Naive thymus-derived CD4-positive, alpha-beta T cell (primary cell): ENCODE measurements at regions of chr3 and their contacts with region 1.

Region 1: DNA sequence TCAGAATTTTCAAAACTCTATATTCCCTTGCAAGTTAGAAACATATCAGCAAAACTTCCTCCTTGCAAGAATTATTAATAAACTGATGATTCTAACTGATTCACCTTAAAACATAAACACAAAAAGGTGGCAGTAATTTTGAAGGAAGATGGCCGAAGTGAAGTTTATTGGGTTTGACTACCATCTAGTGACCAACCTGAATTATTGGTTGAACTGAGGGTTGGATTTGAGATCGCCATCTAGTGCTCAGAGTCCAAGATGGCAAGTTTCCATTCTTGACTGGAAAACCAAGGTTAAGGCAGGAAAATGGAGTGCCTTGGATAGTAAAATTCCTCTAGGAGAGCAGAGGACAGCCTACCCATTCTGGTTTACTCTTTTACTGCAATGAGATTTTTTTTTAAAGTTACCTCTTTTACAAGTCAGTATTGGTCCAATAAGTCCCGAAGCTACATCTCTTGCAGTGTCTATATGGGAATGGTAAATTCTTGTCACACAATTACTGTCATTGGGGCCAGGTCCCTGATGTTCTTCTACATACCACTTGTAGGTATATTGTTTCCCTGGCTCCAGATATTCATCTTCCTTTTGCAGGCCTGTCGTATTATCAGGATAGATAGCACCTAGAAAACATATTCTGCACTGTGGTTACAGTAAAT is 51.6 kb upstream of the CP start:
- DNase-seq: peak in 7 of 9 donors; percentile 19 to 67 (median 52)
- ATAC-seq: peak; percentile 92
- H3K4me3 ChIP-seq: no peak overlapping the region
- H3K4me3 Mint-ChIP-seq: no peak overlapping the region
- H3K27ac ChIP-seq: no peak overlapping the region
- H3K27ac Mint-ChIP-seq: no peak overlapping the region
- H3K4me1 ChIP-seq: peaks cover 4 to 13% of the 10 kb centered on the region in 2 donors
- H3K4me1 Mint-ChIP-seq: peaks cover 6 to 14% (median 13%) of the 10 kb centered on the region in 7 donors
- H3K27me3 ChIP-seq: no peaks in the 10 kb centered on the region
- H3K27me3 Mint-ChIP-seq: peaks cover 0 to 15% (median 0%) of the 10 kb centered on the region in 5 donors

Region 2: GRCh38 chr3:148861277-148861869 is 411.9 kb before region 1 on chr3:
- CTCF ChIA-PET with region 1: interaction called, 3 read pairs
- POLR2A ChIA-PET with region 1: no interaction called
- intact Hi-C with region 1: loop called (anchors 1 to 5 kb)
- DNase-seq: peak in 5 of 9 donors; percentile 4 to 35 (median 14)
- ATAC-seq: peak; percentile 72
- H3K4me3 ChIP-seq: no peak overlapping the region
- H3K4me3 Mint-ChIP-seq: no peak overlapping the region
- H3K27ac ChIP-seq: no peak overlapping the region
- H3K27ac Mint-ChIP-seq: no peak overlapping the region
- H3K4me1 ChIP-seq: no peaks in the 10 kb centered on the region
- H3K4me1 Mint-ChIP-seq: no peaks in the 10 kb centered on the region
- H3K27me3 ChIP-seq: peaks cover 0 to 3% of the 10 kb centered on the region in 2 donors
- H3K27me3 Mint-ChIP-seq: peaks cover 4 to 22% (median 13%) of the 10 kb centered on the region in 5 donors

Region 3: DNA sequence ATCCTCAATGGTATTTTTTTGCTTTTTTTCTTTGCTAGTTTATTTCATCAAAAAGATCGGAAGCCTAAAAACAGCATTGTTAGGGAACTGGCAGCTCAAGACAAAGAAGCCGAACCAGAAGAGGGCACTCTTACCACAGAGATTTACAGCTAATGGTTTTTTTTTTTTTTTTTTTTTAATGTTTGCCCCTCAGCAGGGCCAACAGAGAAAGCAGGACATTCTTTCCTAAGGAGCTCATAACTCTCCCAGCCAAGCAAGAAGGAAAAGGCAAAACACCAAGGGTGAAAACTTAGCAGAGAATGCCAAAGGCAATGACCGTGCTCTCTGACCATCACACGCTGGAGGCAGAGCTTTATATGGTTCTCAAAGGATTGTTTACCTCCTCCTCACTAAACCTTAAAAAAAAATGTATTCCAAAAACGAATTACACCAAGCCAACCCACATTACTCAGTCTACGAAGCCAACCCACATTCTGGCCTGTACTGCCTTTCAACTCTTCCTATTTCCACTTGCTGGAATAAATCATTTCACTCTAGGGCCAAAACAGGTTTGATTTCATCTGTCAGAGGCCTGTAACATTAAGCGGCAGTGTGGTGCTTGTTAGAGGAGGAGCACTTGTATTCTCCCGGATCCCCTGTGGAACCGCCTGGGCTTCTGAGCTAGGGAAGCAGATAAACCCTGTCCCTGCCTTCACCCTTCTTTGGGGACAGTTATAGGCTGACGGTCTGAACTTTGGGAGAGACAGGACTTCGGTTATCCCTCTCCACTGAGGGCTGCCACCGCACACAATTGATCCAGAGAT is 317.5 kb before region 1 on chr3:
- CTCF ChIA-PET with region 1: interaction called, 6 read pairs
- POLR2A ChIA-PET with region 1: no interaction called
- intact Hi-C with region 1: loop called (anchors 1 kb)
- DNase-seq: peak in 4 of 9 donors; percentile 13 to 41 (median 32)
- ATAC-seq: peak; percentile 41
- H3K4me3 ChIP-seq: no peak overlapping the region
- H3K4me3 Mint-ChIP-seq: no peak overlapping the region
- H3K27ac ChIP-seq: no peak overlapping the region
- H3K27ac Mint-ChIP-seq: no peak overlapping the region
- H3K4me1 ChIP-seq: no peaks in the 10 kb centered on the region
- H3K4me1 Mint-ChIP-seq: peaks cover 0 to 13% (median 6%) of the 10 kb centered on the region in 7 donors
- H3K27me3 ChIP-seq: no peaks in the 10 kb centered on the region
- H3K27me3 Mint-ChIP-seq: peaks cover 0 to 17% (median 0%) of the 10 kb centered on the region in 5 donors

Region 4: GRCh38 chr3:149086232-149086988 is 186.8 kb before region 1 on chr3 and contains the start of gene HLTF:
- CTCF ChIA-PET with region 1: no interaction called
- POLR2A ChIA-PET with region 1: no interaction called
- intact Hi-C with region 1: loop called (anchors 1 kb)
- DNase-seq: peak; percentile 75 to 93 (median 90)
- ATAC-seq: peak; percentile 99
- H3K4me3 ChIP-seq: peak within 1 kb of the TSS; percentile 97
- H3K4me3 Mint-ChIP-seq: peak within 1 kb of the TSS; percentile 84 to 100 (median 97)
- H3K27ac ChIP-seq: peak within 1 kb of the TSS; percentile 64
- H3K27ac Mint-ChIP-seq: peak within 1 kb of the TSS; percentile 54 to 95 (median 86)
- H3K4me1 ChIP-seq: peaks cover 4 to 18% of the 10 kb centered on the region in 2 donors
- H3K4me1 Mint-ChIP-seq: peaks cover 15 to 28% (median 22%) of the 10 kb centered on the region in 7 donors
- H3K27me3 ChIP-seq: no peaks in the 10 kb centered on the region
- H3K27me3 Mint-ChIP-seq: no peaks in the 10 kb centered on the region
- total RNA-seq, gene HLTF: 9.1 to 26.5 (median 17.3) TPM

Region 5: DNA sequence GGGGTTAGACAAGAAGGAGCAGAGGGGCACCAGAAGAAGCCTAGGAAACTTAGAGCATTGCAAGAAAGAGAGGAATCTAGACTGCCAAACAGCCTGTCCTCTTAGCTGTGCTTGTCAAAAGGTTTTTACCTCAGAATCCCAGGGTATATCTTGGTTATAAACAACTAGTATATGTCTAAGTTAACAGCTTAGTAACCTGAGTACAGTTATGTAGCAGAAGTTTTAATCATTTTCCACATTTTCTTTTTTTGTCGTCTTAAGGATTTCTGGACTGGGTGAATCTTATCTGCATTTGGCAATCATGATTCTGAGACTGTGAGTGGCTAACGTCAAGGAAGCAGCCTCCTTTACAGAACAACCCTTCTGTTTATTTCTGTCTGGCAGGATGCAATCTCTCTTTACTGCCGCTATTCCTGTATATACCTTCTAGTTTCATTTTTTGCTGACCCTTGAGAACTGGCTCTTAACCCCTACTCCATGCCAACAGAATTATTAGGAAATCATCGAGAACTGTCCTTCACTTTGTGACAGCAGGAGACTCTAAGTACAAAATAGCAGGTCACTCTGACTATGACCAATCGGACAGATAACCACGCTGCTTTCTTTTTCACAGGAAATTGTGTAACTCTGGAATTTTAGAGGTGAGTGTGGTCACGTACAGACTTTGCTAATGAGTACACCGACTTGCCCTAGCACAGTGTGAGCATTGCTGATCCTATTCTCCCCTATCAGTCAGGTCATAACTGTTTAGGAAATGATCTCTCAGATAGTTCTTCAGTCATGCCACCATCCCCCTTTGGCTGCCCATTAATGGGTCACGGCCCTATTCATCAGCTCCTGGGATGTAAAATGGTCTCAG is 48.3 kb before region 1 on chr3:
- CTCF ChIA-PET with region 1: interaction called, 3 read pairs
- POLR2A ChIA-PET with region 1: no interaction called
- intact Hi-C with region 1: loop called in 1 of 2 experiments (anchors 2 kb)
- DNase-seq: peak in 2 of 9 donors; percentile 2 to 41
- ATAC-seq: peak; percentile 90
- H3K4me3 ChIP-seq: peak overlapping the region; percentile 47
- H3K4me3 Mint-ChIP-seq: peak overlapping the region; percentile 31 to 86 (median 82)
- H3K27ac ChIP-seq: no peak overlapping the region
- H3K27ac Mint-ChIP-seq: peak overlapping the region in 8 of 9 donors; percentile 1 to 90 (median 39)
- H3K4me1 ChIP-seq: peaks cover 0 to 7% of the 10 kb centered on the region in 2 donors
- H3K4me1 Mint-ChIP-seq: peaks cover 14 to 32% (median 25%) of the 10 kb centered on the region in 7 donors
- H3K27me3 ChIP-seq: no peaks in the 10 kb centered on the region
- H3K27me3 Mint-ChIP-seq: peaks cover 0 to 6% (median 0%) of the 10 kb centered on the region in 5 donors

Region 6: DNA sequence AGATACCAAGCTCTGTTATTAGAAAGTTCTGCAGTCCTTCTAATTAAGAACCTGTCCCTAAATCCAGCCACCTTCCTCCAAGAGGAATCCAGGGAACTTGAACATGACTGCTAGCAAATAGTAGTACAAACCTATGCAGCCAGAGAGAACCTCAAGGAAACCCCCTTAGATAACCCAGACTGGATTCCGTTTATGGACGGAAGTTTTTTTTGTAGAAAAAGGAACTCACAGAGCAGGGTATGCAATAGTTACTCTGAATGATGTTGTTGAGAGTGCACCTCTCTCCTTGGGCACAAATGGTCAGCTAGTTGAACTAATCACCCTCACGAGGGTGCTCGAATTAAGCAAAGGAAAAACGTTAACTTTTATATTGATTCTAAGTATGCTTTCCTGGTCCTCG is 19.4 kb after region 1 on chr3:
- CTCF ChIA-PET with region 1: no interaction called
- POLR2A ChIA-PET with region 1: no interaction called
- intact Hi-C with region 1: no loop called
- DNase-seq: no peak
- ATAC-seq: no peak
- H3K4me3 ChIP-seq: no peak overlapping the region
- H3K4me3 Mint-ChIP-seq: no peak overlapping the region
- H3K27ac ChIP-seq: no peak overlapping the region
- H3K27ac Mint-ChIP-seq: no peak overlapping the region
- H3K4me1 ChIP-seq: no peaks in the 10 kb centered on the region
- H3K4me1 Mint-ChIP-seq: peaks cover 0 to 5% (median 0%) of the 10 kb centered on the region in 7 donors
- H3K27me3 ChIP-seq: no peaks in the 10 kb centered on the region
- H3K27me3 Mint-ChIP-seq: peaks cover 0 to 8% (median 0%) of the 10 kb centered on the region in 5 donors

Region 7: DNA sequence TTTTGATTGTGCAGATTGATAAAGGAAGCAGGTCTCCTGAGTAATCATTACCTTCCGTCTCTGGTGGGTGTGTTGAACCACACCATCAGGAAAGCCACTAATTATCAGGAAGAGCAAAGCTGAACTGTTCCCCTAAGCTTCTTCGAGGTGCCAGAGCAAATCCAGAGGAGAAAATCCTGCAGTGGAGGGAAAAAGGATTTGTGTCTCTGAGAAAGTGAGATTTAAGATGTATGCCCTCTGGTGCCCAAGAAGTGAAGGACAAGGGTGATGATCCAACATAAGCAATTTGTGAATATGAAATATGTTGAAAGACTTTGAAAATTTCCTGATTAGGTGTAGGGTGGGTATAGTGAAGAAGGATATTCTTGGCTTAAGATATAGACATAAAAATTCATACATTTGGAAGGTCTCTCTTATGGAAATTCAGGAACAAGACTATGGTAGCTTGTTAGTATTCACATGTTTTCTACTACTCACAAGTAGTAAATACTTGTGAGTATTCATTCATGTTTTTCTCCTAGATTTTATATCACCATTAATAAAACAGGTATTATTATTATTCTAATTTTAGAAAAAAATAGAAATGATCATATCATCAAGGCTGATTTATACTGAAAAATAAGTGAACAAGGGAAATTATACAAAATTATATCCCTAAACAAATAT is 444.3 kb after region 1 on chr3:
- CTCF ChIA-PET with region 1: no interaction called
- POLR2A ChIA-PET with region 1: no interaction called
- intact Hi-C with region 1: loop called in 1 of 2 experiments (anchors 2 kb)
- DNase-seq: peak in 4 of 9 donors; percentile 3 to 12 (median 8)
- ATAC-seq: no peak
- H3K4me3 ChIP-seq: no peak overlapping the region
- H3K4me3 Mint-ChIP-seq: no peak overlapping the region
- H3K27ac ChIP-seq: no peak overlapping the region
- H3K27ac Mint-ChIP-seq: no peak overlapping the region
- H3K4me1 ChIP-seq: no peaks in the 10 kb centered on the region
- H3K4me1 Mint-ChIP-seq: no peaks in the 10 kb centered on the region
- H3K27me3 ChIP-seq: no peaks in the 10 kb centered on the region
- H3K27me3 Mint-ChIP-seq: peaks cover 0 to 13% (median 0%) of the 10 kb centered on the region in 5 donors